ENCODE measurements at regions of chr4 and their contacts with region 1.

Region 1: GRCh38 chr4:73573794-73574406 is 46.3 kb downstream of the RASSF6 start:
- DNase-seq: peak; percentile 70 to 75
- H3K4me3 ChIP-seq: no peak overlapping the region
- H3K27ac ChIP-seq: no peak overlapping the region
- H3K4me1 ChIP-seq: no peaks in the 10 kb centered on the region; a peak in 1 of 7 replicates
- H3K27me3 ChIP-seq: no peaks in the 10 kb centered on the region
- CTCF ChIP-seq: peak; percentile 62 to 94 (median 94)
- EP300 ChIP-seq: no peak; a peak in 1 of 3 replicates
- POLR2A ChIP-seq: no peak
- RAD21 ChIP-seq: peak; percentile 97 to 99

Region 2: DNA sequence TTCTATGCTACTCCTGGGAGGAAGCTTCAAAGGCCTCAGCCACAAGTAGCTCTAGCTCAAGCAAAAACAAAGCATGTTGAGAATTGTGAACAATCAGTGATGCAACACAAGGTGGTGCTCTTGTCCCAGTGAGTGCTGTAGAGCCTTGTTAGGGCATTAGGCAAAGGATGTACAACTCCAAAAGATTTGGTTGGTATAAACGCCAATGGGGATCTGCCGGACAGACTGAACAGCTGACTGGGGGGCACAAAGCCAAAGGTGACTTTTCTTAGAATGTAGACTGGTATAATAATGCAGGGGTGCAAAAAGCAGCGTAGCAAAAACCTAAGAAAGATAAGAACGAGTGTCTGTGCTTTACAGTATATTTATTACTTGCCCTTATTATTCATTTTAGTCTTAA is 232.4 kb before region 1 on chr4:
- CTCF ChIA-PET with region 1: interaction called, 30 read pairs
- POLR2A ChIA-PET with region 1: no interaction called
- DNase-seq: peak in 1 of 2 experiments; percentile 53
- H3K4me3 ChIP-seq: no peak overlapping the region
- H3K27ac ChIP-seq: no peak overlapping the region
- H3K4me1 ChIP-seq: peaks cover 0 to 5% (median 1%) of the 10 kb centered on the region in 4 experiments; a peak in 4 of 7 replicates
- H3K27me3 ChIP-seq: no peaks in the 10 kb centered on the region
- CTCF ChIP-seq: peak in 2 of 3 experiments; percentile 90 to 95; a peak in 3 of 4 replicates
- EP300 ChIP-seq: no peak
- POLR2A ChIP-seq: no peak
- RAD21 ChIP-seq: peak; percentile 98 to 100

Region 3: GRCh38 chr4:73446336-73446938 is 127.5 kb before region 1 on chr4:
- CTCF ChIA-PET with region 1: interaction called, 19 read pairs
- POLR2A ChIA-PET with region 1: no interaction called
- DNase-seq: no peak
- H3K4me3 ChIP-seq: no peak overlapping the region
- H3K27ac ChIP-seq: no peak overlapping the region
- H3K4me1 ChIP-seq: peaks cover 4 to 9% (median 7%) of the 10 kb centered on the region in 4 experiments; a peak in 5 of 7 replicates
- H3K27me3 ChIP-seq: no peaks in the 10 kb centered on the region
- CTCF ChIP-seq: peak in 2 of 3 experiments; percentile 83 to 99; a peak in 3 of 4 replicates
- EP300 ChIP-seq: no peak
- POLR2A ChIP-seq: no peak
- RAD21 ChIP-seq: peak; percentile 69

Region 4: GRCh38 chr4:73481358-73481757 is 92.5 kb before region 1 on chr4 and contains the start of gene AFM:
- CTCF ChIA-PET with region 1: no interaction called
- POLR2A ChIA-PET with region 1: no interaction called
- DNase-seq: no peak
- H3K4me3 ChIP-seq: no peak within 1 kb of the TSS
- H3K27ac ChIP-seq: no peak within 1 kb of the TSS
- H3K4me1 ChIP-seq: 0 out of 7 replicates have a peak, but pooled peaks cover 0 to 2% (median 0%) of the 10 kb centered on the region in 4 experiments
- H3K27me3 ChIP-seq: no peaks in the 10 kb centered on the region
- CTCF ChIP-seq: no peak
- EP300 ChIP-seq: no peak
- POLR2A ChIP-seq: no peak
- RAD21 ChIP-seq: no peak
- total RNA-seq, gene AFM: not detected in 2 replicates

Region 5: GRCh38 chr4:73508651-73509050 is 65.2 kb before region 1 on chr4:
- CTCF ChIA-PET with region 1: no interaction called
- POLR2A ChIA-PET with region 1: no interaction called
- DNase-seq: no peak
- H3K4me3 ChIP-seq: no peak overlapping the region
- H3K27ac ChIP-seq: no peak overlapping the region
- H3K4me1 ChIP-seq: no peaks in the 10 kb centered on the region
- H3K27me3 ChIP-seq: no peaks in the 10 kb centered on the region
- CTCF ChIP-seq: no peak
- EP300 ChIP-seq: no peak
- POLR2A ChIP-seq: no peak
- RAD21 ChIP-seq: no peak

Region 6: DNA sequence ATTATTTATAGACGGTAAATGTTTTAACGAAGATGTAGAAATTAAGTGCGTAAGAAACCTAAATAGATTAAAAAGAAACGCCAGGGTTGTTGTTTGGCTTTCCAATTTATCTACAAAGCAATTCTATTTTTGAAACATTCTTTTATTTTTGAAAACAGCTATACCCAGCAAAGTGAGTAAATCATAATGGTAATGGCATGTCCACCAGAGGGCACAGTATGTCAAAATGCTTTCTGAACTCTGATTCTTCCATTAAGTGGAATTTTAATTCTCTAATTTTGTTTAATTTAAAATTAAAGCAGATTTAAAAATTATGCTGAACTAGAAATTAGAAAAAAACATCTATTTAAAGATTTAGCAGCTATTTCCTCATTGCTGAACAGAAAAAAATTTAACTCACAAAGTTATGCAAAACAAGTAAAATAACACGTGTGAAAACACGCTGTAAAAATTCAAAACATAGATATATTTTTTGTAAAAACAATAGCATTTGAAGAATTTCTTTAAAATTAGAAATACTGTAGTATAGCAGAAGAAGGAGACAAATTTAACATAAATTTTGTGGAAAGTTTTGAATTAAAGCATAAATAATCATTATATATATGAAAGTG is 19.8 kb after region 1 on chr4:
- CTCF ChIA-PET with region 1: interaction called, 16 read pairs
- POLR2A ChIA-PET with region 1: no interaction called
- DNase-seq: no peak
- H3K4me3 ChIP-seq: no peak overlapping the region
- H3K27ac ChIP-seq: no peak overlapping the region
- H3K4me1 ChIP-seq: peaks cover 0 to 3% (median 0%) of the 10 kb centered on the region in 4 experiments; a peak in 1 of 7 replicates
- H3K27me3 ChIP-seq: no peaks in the 10 kb centered on the region
- CTCF ChIP-seq: peak in 2 of 3 experiments; percentile 21 to 35; a peak in 2 of 4 replicates
- EP300 ChIP-seq: no peak
- POLR2A ChIP-seq: no peak
- RAD21 ChIP-seq: peak; percentile 35 to 38

Region 7: GRCh38 chr4:73653695-73654106 is 79.8 kb after region 1 on chr4:
- CTCF ChIA-PET with region 1: interaction called, 127 read pairs
- POLR2A ChIA-PET with region 1: no interaction called
- DNase-seq: no peak
- H3K4me3 ChIP-seq: no peak overlapping the region
- H3K27ac ChIP-seq: no peak overlapping the region
- H3K4me1 ChIP-seq: no peaks in the 10 kb centered on the region
- H3K27me3 ChIP-seq: peaks cover 0 to 2% (median 0%) of the 10 kb centered on the region in 4 experiments; a peak in 1 of 7 replicates
- CTCF ChIP-seq: peak; percentile 17 to 70 (median 44)
- EP300 ChIP-seq: no peak
- POLR2A ChIP-seq: no peak
- RAD21 ChIP-seq: peak; percentile 89 to 90

Region 8: GRCh38 chr4:73662709-73663546 is 89.0 kb after region 1 on chr4:
- CTCF ChIA-PET with region 1: interaction called, 26 read pairs
- POLR2A ChIA-PET with region 1: no interaction called
- DNase-seq: no peak
- H3K4me3 ChIP-seq: no peak overlapping the region
- H3K27ac ChIP-seq: no peak overlapping the region
- H3K4me1 ChIP-seq: peaks cover 0 to 5% (median 1%) of the 10 kb centered on the region in 4 experiments; a peak in 2 of 7 replicates
- H3K27me3 ChIP-seq: no peaks in the 10 kb centered on the region
- CTCF ChIP-seq: peak in 2 of 3 experiments; percentile 3 to 22; a peak in 2 of 4 replicates
- EP300 ChIP-seq: no peak
- POLR2A ChIP-seq: no peak
- RAD21 ChIP-seq: peak; percentile 50 to 52

Measured in H1 (cell line).